Right ventricle myocardium superior (tissue), 1 donor: ENCODE measurements at regions of chr21 and their contacts with region 1.

Region 1: DNA sequence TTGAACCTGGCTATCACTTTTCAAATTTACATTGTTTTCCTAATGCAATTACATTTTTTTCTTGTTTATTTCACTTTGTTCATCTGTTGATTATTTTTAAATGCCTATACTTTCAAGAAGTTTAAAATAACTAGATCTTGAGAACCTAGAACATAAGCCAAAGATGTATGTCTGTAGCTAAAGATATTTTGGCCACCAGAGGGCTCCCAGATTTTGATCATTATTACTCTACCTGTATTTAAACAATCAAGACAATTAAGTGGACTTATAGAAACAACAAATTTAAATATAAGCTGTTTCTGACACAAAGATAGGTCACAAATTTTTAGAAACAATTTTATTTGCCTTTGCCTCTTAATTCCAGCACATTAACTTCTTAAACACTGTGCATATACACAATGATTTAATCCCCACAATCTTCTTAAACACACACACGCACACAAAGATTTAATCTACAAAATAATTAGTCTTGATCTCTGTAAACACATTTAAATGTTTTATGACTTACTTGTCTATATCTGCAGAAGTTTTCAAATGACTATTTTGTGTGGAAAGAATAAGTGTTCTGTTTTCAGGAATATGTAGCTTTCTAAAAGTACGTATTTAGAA is 380.0 kb downstream of the DSCAM start:
- DNase-seq: no peak
- ATAC-seq: no peak

Region 2: GRCh38 chr21:40841524-40842202 is 374.7 kb after region 1 on chr21:
- intact Hi-C with region 1: loop called (anchors 5 kb)
- DNase-seq: peak; percentile 59
- ATAC-seq: peak; percentile 89

Region 3: DNA sequence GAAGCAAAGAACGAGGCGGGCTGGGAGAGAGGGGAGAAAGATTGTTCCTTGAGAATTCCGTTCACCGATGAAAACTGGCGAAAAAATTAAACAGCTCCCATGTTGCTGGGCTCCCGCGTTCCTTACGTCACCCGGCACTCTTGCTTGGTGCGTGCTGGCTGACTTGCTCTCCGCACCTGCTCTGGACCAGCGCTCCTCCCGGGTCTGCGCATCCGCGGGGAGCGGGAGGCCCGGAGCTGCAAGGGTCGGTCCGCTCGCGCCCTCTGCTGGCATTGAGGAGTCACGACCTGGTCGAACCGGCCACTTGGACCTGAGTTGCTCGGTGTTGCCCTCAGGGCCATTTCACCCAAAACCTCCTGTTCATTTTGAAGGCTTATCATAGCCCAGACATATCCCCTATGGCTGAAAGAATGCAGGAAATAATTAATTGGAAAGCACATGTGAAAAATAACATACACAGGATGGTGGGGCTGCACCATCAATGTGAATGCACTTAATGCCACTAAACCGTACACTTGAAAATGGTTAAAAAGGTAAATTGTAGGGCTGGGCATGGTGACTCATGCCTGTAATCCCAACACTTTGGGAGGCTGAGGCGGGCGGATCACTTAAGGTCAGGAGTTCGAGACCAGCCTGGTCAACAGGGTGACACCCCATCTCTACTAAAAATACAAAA is 602.1 kb after region 1 on chr21:
- intact Hi-C with region 1: loop called (anchors 5 kb)
- DNase-seq: peak; percentile 88
- ATAC-seq: peak; percentile 92